ENCODE measurements at regions of chr6 and their contacts with region 1.

Region 1: GRCh38 chr6:136226027-136226673 is 24.0 kb downstream of the MTFR2 start:
- DNase-seq: peak; percentile 32 to 78 (median 44)
- ATAC-seq: peak; percentile 91
- H3K4me3 ChIP-seq: peak overlapping the region; percentile 10
- H3K4me3 Mint-ChIP-seq: peak overlapping the region; percentile 59
- H3K27ac ChIP-seq: no peak overlapping the region
- H3K27ac Mint-ChIP-seq: no peak overlapping the region
- H3K4me1 ChIP-seq: peaks cover 7% of the 10 kb centered on the region
- H3K4me1 Mint-ChIP-seq: peaks cover 12% of the 10 kb centered on the region
- H3K27me3 ChIP-seq: no peaks in the 10 kb centered on the region
- H3K27me3 Mint-ChIP-seq: no peaks in the 10 kb centered on the region
- CTCF ChIP-seq: peak; percentile 100

Region 2: GRCh38 chr6:135451693-135452092 is 774.5 kb before region 1 on chr6:
- CTCF ChIA-PET with region 1: interaction called, 4 read pairs
- POLR2A ChIA-PET with region 1: no interaction called
- intact Hi-C with region 1: loop called (anchors 1 kb)
- DNase-seq: peak in 3 of 14 experiments; percentile 42 to 66 (median 64)
- ATAC-seq: peak; percentile 54
- H3K4me3 ChIP-seq: no peak overlapping the region
- H3K4me3 Mint-ChIP-seq: no peak overlapping the region
- H3K27ac ChIP-seq: no peak overlapping the region
- H3K27ac Mint-ChIP-seq: no peak overlapping the region
- H3K4me1 ChIP-seq: no peaks in the 10 kb centered on the region
- H3K4me1 Mint-ChIP-seq: no peaks in the 10 kb centered on the region
- H3K27me3 ChIP-seq: no peaks in the 10 kb centered on the region
- H3K27me3 Mint-ChIP-seq: no peaks in the 10 kb centered on the region
- CTCF ChIP-seq: peak; percentile 86

Region 3: DNA sequence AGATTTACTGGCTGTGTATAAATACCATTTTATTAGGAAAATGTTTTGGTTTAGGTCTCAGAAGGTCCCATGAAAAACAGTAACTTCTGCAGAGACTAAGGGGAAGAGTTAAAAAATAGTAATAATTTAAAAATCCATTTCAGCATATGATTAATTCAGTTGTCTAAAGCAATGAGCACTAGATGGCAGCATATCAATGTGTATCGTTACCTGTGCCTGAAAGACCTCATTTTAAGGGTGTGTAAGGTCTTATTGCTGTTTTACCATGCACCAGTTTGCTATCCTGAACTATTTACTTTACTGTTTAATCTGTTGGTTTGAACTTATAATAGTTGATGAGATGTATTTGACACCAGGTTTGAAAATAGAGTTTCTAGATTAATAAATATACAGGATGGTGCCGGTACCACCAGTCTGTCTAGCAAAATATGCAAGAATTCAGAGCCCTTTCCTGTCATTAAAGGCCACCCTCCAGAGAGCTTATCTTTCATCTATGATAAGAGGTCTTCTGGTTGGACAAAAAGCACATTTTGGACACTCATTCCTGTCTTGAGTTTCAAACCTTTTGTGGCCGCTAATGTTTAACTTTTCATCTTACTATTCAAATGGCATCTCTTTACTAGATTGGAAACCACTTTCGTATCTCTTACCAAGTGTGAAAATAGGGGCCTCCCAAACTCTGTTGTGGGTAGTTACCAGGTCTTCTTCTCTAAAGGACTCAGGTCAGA is 719.7 kb before region 1 on chr6:
- CTCF ChIA-PET with region 1: interaction called, 5 read pairs
- POLR2A ChIA-PET with region 1: no interaction called
- intact Hi-C with region 1: loop called (anchors 1 to 2 kb)
- DNase-seq: peak in 4 of 14 experiments; percentile 10 to 71 (median 66)
- ATAC-seq: peak; percentile 84
- H3K4me3 ChIP-seq: no peak overlapping the region
- H3K4me3 Mint-ChIP-seq: no peak overlapping the region
- H3K27ac ChIP-seq: no peak overlapping the region
- H3K27ac Mint-ChIP-seq: no peak overlapping the region
- H3K4me1 ChIP-seq: no peaks in the 10 kb centered on the region
- H3K4me1 Mint-ChIP-seq: no peaks in the 10 kb centered on the region
- H3K27me3 ChIP-seq: no peaks in the 10 kb centered on the region
- H3K27me3 Mint-ChIP-seq: no peaks in the 10 kb centered on the region
- CTCF ChIP-seq: peak; percentile 79

Region 4: DNA sequence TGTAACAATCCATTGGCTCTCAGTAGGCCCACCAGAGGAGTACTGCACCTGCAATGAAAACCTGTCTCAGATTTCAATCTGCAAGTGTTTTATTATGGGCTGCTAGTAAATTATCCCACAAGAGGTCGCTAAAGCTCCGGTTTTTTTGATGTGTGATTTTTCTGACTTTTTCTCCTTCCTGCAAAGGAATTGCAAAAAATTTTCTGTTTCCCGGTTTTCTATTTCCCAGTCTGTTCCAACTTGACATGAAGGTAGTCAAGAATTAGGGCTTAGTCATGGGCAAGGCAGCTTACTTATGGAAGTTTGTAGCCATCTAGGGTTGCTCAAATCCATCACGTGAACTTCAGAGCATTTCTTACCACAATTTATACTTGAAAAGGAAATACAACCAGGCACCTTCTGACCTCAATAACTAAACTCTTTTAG is 690.1 kb before region 1 on chr6:
- CTCF ChIA-PET with region 1: interaction called, 6 read pairs
- POLR2A ChIA-PET with region 1: no interaction called
- intact Hi-C with region 1: loop called (anchors 1 kb)
- DNase-seq: peak in 3 of 14 experiments; percentile 46 to 60 (median 56)
- ATAC-seq: peak; percentile 68
- H3K4me3 ChIP-seq: no peak overlapping the region
- H3K4me3 Mint-ChIP-seq: peak overlapping the region; percentile 43
- H3K27ac ChIP-seq: no peak overlapping the region
- H3K27ac Mint-ChIP-seq: no peak overlapping the region
- H3K4me1 ChIP-seq: peaks cover 5% of the 10 kb centered on the region
- H3K4me1 Mint-ChIP-seq: peaks cover 6% of the 10 kb centered on the region
- H3K27me3 ChIP-seq: no peaks in the 10 kb centered on the region
- H3K27me3 Mint-ChIP-seq: no peaks in the 10 kb centered on the region
- CTCF ChIP-seq: peak; percentile 59

Region 5: GRCh38 chr6:135675862-135676261 is 550.3 kb before region 1 on chr6:
- CTCF ChIA-PET with region 1: interaction called, 6 read pairs
- POLR2A ChIA-PET with region 1: no interaction called
- intact Hi-C with region 1: loop called (anchors 1 kb)
- DNase-seq: peak in 12 of 14 experiments; percentile 6 to 77 (median 23)
- ATAC-seq: peak; percentile 89
- H3K4me3 ChIP-seq: no peak overlapping the region
- H3K4me3 Mint-ChIP-seq: no peak overlapping the region
- H3K27ac ChIP-seq: no peak overlapping the region
- H3K27ac Mint-ChIP-seq: no peak overlapping the region
- H3K4me1 ChIP-seq: no peaks in the 10 kb centered on the region
- H3K4me1 Mint-ChIP-seq: no peaks in the 10 kb centered on the region
- H3K27me3 ChIP-seq: no peaks in the 10 kb centered on the region
- H3K27me3 Mint-ChIP-seq: no peaks in the 10 kb centered on the region
- CTCF ChIP-seq: peak; percentile 81

Region 6: GRCh38 chr6:135909737-135910387 is 316.3 kb before region 1 on chr6:
- CTCF ChIA-PET with region 1: interaction called, 8 read pairs
- POLR2A ChIA-PET with region 1: no interaction called
- intact Hi-C with region 1: loop called (anchors 1 kb)
- DNase-seq: peak; percentile 18 to 85 (median 48)
- ATAC-seq: peak; percentile 91
- H3K4me3 ChIP-seq: no peak overlapping the region
- H3K4me3 Mint-ChIP-seq: no peak overlapping the region
- H3K27ac ChIP-seq: no peak overlapping the region
- H3K27ac Mint-ChIP-seq: no peak overlapping the region
- H3K4me1 ChIP-seq: peaks cover 3% of the 10 kb centered on the region
- H3K4me1 Mint-ChIP-seq: peaks cover 6% of the 10 kb centered on the region
- H3K27me3 ChIP-seq: no peaks in the 10 kb centered on the region
- H3K27me3 Mint-ChIP-seq: no peaks in the 10 kb centered on the region
- CTCF ChIP-seq: peak; percentile 70

Region 7: DNA sequence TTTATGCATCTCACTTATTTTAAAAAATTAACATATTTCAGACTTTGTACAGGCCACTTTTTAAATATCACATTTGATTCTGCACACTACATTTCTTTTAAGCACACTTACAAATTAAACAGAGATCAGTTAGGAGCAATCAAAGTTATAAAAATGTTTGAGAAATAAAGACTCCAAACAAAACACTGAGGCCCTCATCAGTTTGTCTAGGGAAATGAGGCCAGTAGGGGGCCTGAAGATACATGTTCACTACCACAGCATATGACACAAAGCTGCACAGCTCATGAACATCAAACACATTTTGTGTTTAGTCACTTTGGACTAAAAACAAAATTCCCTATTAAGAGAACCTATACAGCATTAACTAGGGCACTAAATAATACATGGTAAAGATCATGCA is 194.2 kb before region 1 on chr6:
- CTCF ChIA-PET with region 1: interaction called, 6 read pairs
- POLR2A ChIA-PET with region 1: no interaction called
- intact Hi-C with region 1: loop called (anchors 1 to 5 kb)
- DNase-seq: peak in 2 of 14 experiments; percentile 22
- ATAC-seq: no peak
- H3K4me3 ChIP-seq: no peak overlapping the region
- H3K4me3 Mint-ChIP-seq: no peak overlapping the region
- H3K27ac ChIP-seq: no peak overlapping the region
- H3K27ac Mint-ChIP-seq: no peak overlapping the region
- H3K4me1 ChIP-seq: no peaks in the 10 kb centered on the region
- H3K4me1 Mint-ChIP-seq: no peaks in the 10 kb centered on the region
- H3K27me3 ChIP-seq: no peaks in the 10 kb centered on the region
- H3K27me3 Mint-ChIP-seq: no peaks in the 10 kb centered on the region
- CTCF ChIP-seq: peak; percentile 37

Measured in CD4-positive, alpha-beta T cell (primary cell).